ENCODE measurements at regions of chr6 and their contacts with region 1.

Region 1: DNA sequence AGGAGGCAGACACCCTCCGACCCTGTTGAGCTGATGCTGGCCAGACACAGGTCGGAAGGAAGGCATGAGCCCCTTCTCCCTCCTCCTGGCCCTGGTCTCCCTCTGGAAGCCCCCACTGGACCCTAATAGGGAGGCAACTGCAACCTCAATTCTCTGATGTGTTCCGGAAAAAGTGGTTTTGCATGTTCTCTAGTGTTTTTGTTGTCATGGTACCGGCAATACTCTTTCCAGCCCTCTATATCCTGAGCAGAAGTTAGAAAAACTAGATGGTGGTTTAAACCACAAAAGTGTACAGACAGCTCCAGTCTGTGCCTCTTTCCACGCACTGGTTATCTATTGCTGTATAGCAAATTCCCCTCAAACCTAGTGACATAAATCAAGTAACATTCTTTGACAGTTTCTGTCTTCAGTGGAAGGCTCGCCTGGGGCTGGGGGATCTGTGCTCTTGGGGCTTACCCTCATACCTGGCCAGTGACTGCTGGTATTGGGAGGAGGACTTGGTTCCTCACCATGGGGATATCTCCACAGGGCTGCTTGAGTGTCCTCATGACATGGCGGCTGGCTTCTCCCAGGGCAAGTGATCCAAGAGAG is 37.0 kb downstream of the SYTL3 start:
- DNase-seq: peak; percentile 63
- H3K4me3 Mint-ChIP-seq: no peak overlapping the region
- H3K27ac Mint-ChIP-seq: peak overlapping the region; percentile 53
- H3K4me1 Mint-ChIP-seq: peaks cover 59% of the 10 kb centered on the region
- H3K27me3 Mint-ChIP-seq: no peaks in the 10 kb centered on the region

Region 2: GRCh38 chr6:158213925-158214674 is 472.8 kb before region 1 on chr6:
- CTCF ChIA-PET with region 1: interaction called, 14 read pairs
- DNase-seq: peak; percentile 70
- H3K4me3 Mint-ChIP-seq: no peak overlapping the region
- H3K27ac Mint-ChIP-seq: no peak overlapping the region
- H3K4me1 Mint-ChIP-seq: peaks cover 19% of the 10 kb centered on the region
- H3K27me3 Mint-ChIP-seq: peaks cover 2% of the 10 kb centered on the region

Region 3: GRCh38 chr6:158220786-158221442 is 466.0 kb before region 1 on chr6:
- CTCF ChIA-PET with region 1: interaction called, 17 read pairs
- DNase-seq: peak; percentile 81
- H3K4me3 Mint-ChIP-seq: no peak overlapping the region
- H3K27ac Mint-ChIP-seq: no peak overlapping the region
- H3K4me1 Mint-ChIP-seq: peaks cover 4% of the 10 kb centered on the region
- H3K27me3 Mint-ChIP-seq: peaks cover 35% of the 10 kb centered on the region

Region 4: GRCh38 chr6:158496700-158497099 is 190.2 kb before region 1 on chr6:
- CTCF ChIA-PET with region 1: no interaction called
- DNase-seq: no peak
- H3K4me3 Mint-ChIP-seq: no peak overlapping the region
- H3K27ac Mint-ChIP-seq: no peak overlapping the region
- H3K4me1 Mint-ChIP-seq: no peaks in the 10 kb centered on the region
- H3K27me3 Mint-ChIP-seq: no peaks in the 10 kb centered on the region

Region 5: GRCh38 chr6:158631678-158632537 is 55.0 kb before region 1 on chr6:
- CTCF ChIA-PET with region 1: interaction called, 30 read pairs
- DNase-seq: no peak
- H3K4me3 Mint-ChIP-seq: no peak overlapping the region
- H3K27ac Mint-ChIP-seq: peak overlapping the region; percentile 78
- H3K4me1 Mint-ChIP-seq: peaks cover 51% of the 10 kb centered on the region
- H3K27me3 Mint-ChIP-seq: no peaks in the 10 kb centered on the region

Region 6: DNA sequence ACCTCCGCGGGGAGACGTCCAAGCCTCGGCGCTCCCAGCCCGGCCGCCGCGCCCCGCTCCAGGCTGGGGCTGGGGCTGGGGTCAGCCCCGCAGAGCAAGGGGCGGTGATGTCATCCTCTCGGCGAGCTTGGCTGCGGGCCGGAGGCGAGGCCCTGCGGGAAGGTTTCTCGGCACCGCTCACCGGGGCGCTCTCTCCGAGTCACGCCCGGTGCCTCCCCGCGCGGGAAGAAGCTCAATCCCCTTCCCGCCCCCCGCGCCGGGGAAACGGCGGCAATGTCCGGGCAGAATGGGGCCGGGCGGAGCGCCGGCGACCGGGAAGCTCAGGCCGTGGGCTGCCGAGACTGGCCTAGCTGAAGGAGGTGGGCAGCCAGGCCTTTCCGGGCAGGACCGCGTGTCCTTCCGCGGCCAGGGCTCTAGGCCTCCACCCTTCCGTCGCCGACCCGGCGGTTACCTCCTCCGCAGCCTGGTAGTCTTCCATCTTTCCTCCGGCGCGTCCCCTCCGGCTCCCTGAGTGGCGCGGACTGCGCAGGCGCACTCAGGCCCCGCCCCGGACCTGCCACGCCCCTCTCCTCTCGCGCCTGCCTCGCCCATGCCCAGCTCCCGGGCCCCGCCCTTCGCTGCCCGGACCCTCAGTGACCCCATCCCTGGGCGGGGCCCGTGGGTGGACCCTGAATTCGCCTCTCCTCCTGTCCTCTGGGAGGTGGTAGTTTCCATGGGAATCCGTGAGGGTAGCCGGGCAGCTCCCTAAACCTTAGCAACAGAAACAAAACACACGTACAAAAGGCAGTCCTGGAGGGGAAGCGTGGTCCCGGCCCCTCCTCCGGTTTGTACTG is 42.4 kb before region 1 on chr6 and contains the start of gene DYNLT1:
- CTCF ChIA-PET with region 1: interaction called, 19 read pairs
- DNase-seq: peak; percentile 90
- H3K4me3 Mint-ChIP-seq: peak within 1 kb of the TSS; percentile 98
- H3K27ac Mint-ChIP-seq: peak within 1 kb of the TSS; percentile 97
- H3K4me1 Mint-ChIP-seq: peaks cover 75% of the 10 kb centered on the region
- H3K27me3 Mint-ChIP-seq: peaks cover 4% of the 10 kb centered on the region

Region 7: DNA sequence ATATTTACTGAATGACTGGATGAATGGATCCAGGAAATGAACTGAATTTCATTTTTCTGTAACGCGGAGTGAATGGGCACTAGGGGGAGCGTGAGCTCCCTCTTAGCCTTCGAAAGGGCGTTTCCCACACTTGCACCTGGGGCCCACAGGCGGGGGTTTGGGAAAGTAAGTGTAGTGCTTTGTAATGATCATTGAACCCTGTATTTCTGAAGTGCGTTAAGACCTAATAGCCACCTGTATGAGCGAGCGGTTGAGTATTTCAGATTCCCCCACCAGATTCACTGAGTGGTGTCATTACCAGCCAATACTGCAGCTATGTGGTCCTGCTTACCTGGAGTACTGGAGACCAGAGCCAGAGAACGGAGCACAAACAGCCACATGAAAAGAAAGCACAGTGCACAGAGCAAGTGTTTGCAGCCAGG is 26.5 kb before region 1 on chr6:
- CTCF ChIA-PET with region 1: interaction called, 133 read pairs
- DNase-seq: peak; percentile 68
- H3K4me3 Mint-ChIP-seq: no peak overlapping the region
- H3K27ac Mint-ChIP-seq: peak overlapping the region; percentile 52
- H3K4me1 Mint-ChIP-seq: peaks cover 67% of the 10 kb centered on the region
- H3K27me3 Mint-ChIP-seq: no peaks in the 10 kb centered on the region

Region 8: GRCh38 chr6:159042003-159042825 is 355.3 kb after region 1 on chr6:
- CTCF ChIA-PET with region 1: no interaction called
- DNase-seq: peak; percentile 83
- H3K4me3 Mint-ChIP-seq: peak overlapping the region; percentile 96
- H3K27ac Mint-ChIP-seq: peak overlapping the region; percentile 98
- H3K4me1 Mint-ChIP-seq: peaks cover 66% of the 10 kb centered on the region
- H3K27me3 Mint-ChIP-seq: no peaks in the 10 kb centered on the region